ENCODE measurements at regions of chr3 and their contacts with region 1.

Region 1: DNA sequence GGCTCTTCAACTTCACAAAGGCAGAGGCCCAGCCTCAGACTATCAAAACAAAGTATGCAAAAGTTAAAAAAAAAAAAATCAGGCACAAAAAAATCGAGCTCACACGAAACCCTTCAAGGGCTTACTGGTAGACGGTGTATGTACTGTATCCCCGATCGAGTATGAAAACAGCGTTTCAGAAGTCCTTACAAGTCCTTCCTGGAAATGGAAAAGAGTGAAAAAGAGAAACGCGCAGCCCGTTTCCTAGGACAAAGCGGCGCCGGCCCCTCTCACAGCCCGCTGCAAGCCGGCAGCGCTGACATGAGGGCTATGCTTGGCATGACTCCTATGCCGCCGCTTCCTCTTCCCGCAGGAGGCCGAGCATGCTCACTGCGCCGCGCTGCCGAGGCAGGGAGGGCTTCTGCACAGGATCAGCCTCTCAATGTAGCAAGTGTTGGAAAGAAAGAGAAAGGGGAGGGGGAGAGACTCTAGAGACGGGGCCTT is at the start of gene VGLL4:
- DNase-seq: peak in 8 of 9 experiments; percentile 55 to 79 (median 66)
- ATAC-seq: peak; percentile 52
- H3K4me3 ChIP-seq: peak within 1 kb of the TSS; percentile 82 to 91
- H3K4me3 Mint-ChIP-seq: peak within 1 kb of the TSS; percentile 99
- H3K27ac ChIP-seq: peak within 1 kb of the TSS; percentile 85 to 95
- H3K27ac Mint-ChIP-seq: peak within 1 kb of the TSS; percentile 99
- H3K4me1 ChIP-seq: peaks cover 19% of the 10 kb centered on the region
- H3K4me1 Mint-ChIP-seq: peaks cover 33% of the 10 kb centered on the region
- H3K27me3 ChIP-seq: no peaks in the 10 kb centered on the region
- H3K27me3 Mint-ChIP-seq: no peaks in the 10 kb centered on the region
- CTCF ChIP-seq: no peak
- total RNA-seq, gene VGLL4: 13.8 to 14.1 TPM

Region 2: GRCh38 chr3:11582191-11582968 is 61.3 kb before region 1 on chr3:
- CTCF ChIA-PET with region 1: no interaction called
- POLR2A ChIA-PET with region 1: no interaction called
- intact Hi-C with region 1: loop called (anchors 5 to 10 kb)
- DNase-seq: no peak
- ATAC-seq: no peak
- H3K4me3 ChIP-seq: peak overlapping the region in 1 of 2 experiments; percentile 28
- H3K4me3 Mint-ChIP-seq: peak overlapping the region; percentile 64
- H3K27ac ChIP-seq: no peak overlapping the region
- H3K27ac Mint-ChIP-seq: peak overlapping the region; percentile 73
- H3K4me1 ChIP-seq: peaks cover 21% of the 10 kb centered on the region
- H3K4me1 Mint-ChIP-seq: peaks cover 63% of the 10 kb centered on the region
- H3K27me3 ChIP-seq: no peaks in the 10 kb centered on the region
- H3K27me3 Mint-ChIP-seq: no peaks in the 10 kb centered on the region
- CTCF ChIP-seq: no peak

Region 3: DNA sequence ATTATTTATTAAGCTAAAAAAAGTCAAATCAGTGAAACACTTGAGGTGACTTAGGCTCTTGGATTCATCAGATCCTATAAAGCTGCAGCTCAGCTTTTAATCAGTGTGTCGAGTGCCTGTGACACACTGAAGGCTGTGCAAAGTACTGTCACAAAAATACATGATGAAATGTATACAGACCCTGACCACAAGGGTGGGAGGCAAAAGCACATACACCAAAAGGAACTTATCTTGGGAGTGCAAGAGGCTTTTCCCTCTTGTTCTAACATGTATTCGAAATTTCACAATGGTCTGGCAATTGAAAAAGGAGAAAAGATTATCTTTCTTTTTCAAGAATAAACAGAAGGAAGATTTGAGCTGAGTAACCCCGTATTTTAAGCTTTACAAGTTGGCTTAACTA is 35.8 kb before region 1 on chr3:
- CTCF ChIA-PET with region 1: no interaction called
- POLR2A ChIA-PET with region 1: no interaction called
- intact Hi-C with region 1: loop called in 1 of 2 experiments (anchors 5 kb)
- DNase-seq: no peak
- ATAC-seq: no peak
- H3K4me3 ChIP-seq: no peak overlapping the region
- H3K4me3 Mint-ChIP-seq: no peak overlapping the region
- H3K27ac ChIP-seq: no peak overlapping the region
- H3K27ac Mint-ChIP-seq: peak overlapping the region; percentile 52
- H3K4me1 ChIP-seq: peaks cover under 1% of the 10 kb centered on the region
- H3K4me1 Mint-ChIP-seq: peaks cover 76% of the 10 kb centered on the region
- H3K27me3 ChIP-seq: no peaks in the 10 kb centered on the region
- H3K27me3 Mint-ChIP-seq: no peaks in the 10 kb centered on the region
- CTCF ChIP-seq: no peak

Region 4: GRCh38 chr3:11624161-11624560 is 19.5 kb before region 1 on chr3:
- CTCF ChIA-PET with region 1: interaction called, 3 read pairs
- POLR2A ChIA-PET with region 1: interaction called, 5 read pairs
- intact Hi-C with region 1: loop called in 1 of 2 experiments (anchors 2 kb)
- DNase-seq: peak in 5 of 9 experiments; percentile 34 to 75 (median 61)
- ATAC-seq: peak; percentile 91
- H3K4me3 ChIP-seq: no peak overlapping the region
- H3K4me3 Mint-ChIP-seq: peak overlapping the region; percentile 68
- H3K27ac ChIP-seq: peak overlapping the region in 1 of 2 experiments; percentile 15
- H3K27ac Mint-ChIP-seq: peak overlapping the region; percentile 82
- H3K4me1 ChIP-seq: peaks cover 45% of the 10 kb centered on the region
- H3K4me1 Mint-ChIP-seq: peaks cover 65% of the 10 kb centered on the region
- H3K27me3 ChIP-seq: no peaks in the 10 kb centered on the region
- H3K27me3 Mint-ChIP-seq: no peaks in the 10 kb centered on the region
- CTCF ChIP-seq: no peak

Region 5: DNA sequence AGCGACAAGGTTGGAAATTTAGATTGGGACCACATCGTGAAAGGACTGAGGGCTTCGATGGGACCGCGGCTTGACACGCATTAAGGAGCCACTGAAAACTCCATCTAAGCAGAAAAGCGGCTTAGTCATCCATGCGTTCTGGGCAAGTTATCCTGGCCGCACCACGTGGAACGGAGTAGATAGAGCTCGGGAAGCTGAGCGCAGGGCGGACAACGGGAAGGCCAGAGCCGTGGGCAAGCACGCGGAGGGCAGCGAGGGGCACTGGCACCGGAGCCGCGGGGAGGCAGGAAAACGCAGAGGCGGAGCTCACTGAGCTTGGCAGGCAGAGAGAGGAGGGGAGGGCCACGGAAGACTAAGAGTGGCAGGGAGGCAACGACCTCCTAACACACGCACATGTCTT is 61.4 kb after region 1 on chr3:
- CTCF ChIA-PET with region 1: no interaction called
- POLR2A ChIA-PET with region 1: no interaction called
- intact Hi-C with region 1: no loop called
- DNase-seq: no peak
- ATAC-seq: no peak
- H3K4me3 ChIP-seq: no peak overlapping the region
- H3K4me3 Mint-ChIP-seq: no peak overlapping the region
- H3K27ac ChIP-seq: no peak overlapping the region
- H3K27ac Mint-ChIP-seq: no peak overlapping the region
- H3K4me1 ChIP-seq: no peaks in the 10 kb centered on the region
- H3K4me1 Mint-ChIP-seq: no peaks in the 10 kb centered on the region
- H3K27me3 ChIP-seq: no peaks in the 10 kb centered on the region
- H3K27me3 Mint-ChIP-seq: no peaks in the 10 kb centered on the region
- CTCF ChIP-seq: no peak

Region 6: GRCh38 chr3:11719406-11720230 is 76.0 kb after region 1 on chr3:
- CTCF ChIA-PET with region 1: no interaction called
- POLR2A ChIA-PET with region 1: no interaction called
- intact Hi-C with region 1: loop called in 1 of 2 experiments (anchors 2 kb)
- DNase-seq: peak; percentile 54 to 86 (median 79)
- ATAC-seq: peak; percentile 81
- H3K4me3 ChIP-seq: peak overlapping the region; percentile 68 to 73
- H3K4me3 Mint-ChIP-seq: peak overlapping the region; percentile 88
- H3K27ac ChIP-seq: peak overlapping the region in 1 of 2 experiments; percentile 56
- H3K27ac Mint-ChIP-seq: no peak overlapping the region
- H3K4me1 ChIP-seq: peaks cover 15% of the 10 kb centered on the region
- H3K4me1 Mint-ChIP-seq: peaks cover 24% of the 10 kb centered on the region
- H3K27me3 ChIP-seq: no peaks in the 10 kb centered on the region
- H3K27me3 Mint-ChIP-seq: peaks cover 8% of the 10 kb centered on the region
- CTCF ChIP-seq: no peak

Region 7: GRCh38 chr3:11846281-11847034 is 202.8 kb after region 1 on chr3 and contains the start of gene TAMM41:
- CTCF ChIA-PET with region 1: no interaction called
- POLR2A ChIA-PET with region 1: interaction called, 8 read pairs
- intact Hi-C with region 1: loop called (anchors 5 kb)
- DNase-seq: peak; percentile 77 to 94 (median 89)
- ATAC-seq: peak; percentile 99
- H3K4me3 ChIP-seq: peak within 1 kb of the TSS; percentile 91 to 92
- H3K4me3 Mint-ChIP-seq: peak within 1 kb of the TSS; percentile 99
- H3K27ac ChIP-seq: peak within 1 kb of the TSS; percentile 80 to 88
- H3K27ac Mint-ChIP-seq: peak within 1 kb of the TSS; percentile 97
- H3K4me1 ChIP-seq: peaks cover 28% of the 10 kb centered on the region
- H3K4me1 Mint-ChIP-seq: peaks cover 52% of the 10 kb centered on the region
- H3K27me3 ChIP-seq: no peaks in the 10 kb centered on the region
- H3K27me3 Mint-ChIP-seq: no peaks in the 10 kb centered on the region
- CTCF ChIP-seq: peak; percentile 62
- total RNA-seq, gene TAMM41: 16.2 to 18.5 TPM

Region 8: GRCh38 chr3:12556671-12557472 is 913.2 kb after region 1 on chr3 and contains the start of gene MKRN2:
- CTCF ChIA-PET with region 1: no interaction called
- POLR2A ChIA-PET with region 1: no interaction called
- intact Hi-C with region 1: loop called in 1 of 2 experiments (anchors 5 kb)
- DNase-seq: peak; percentile 67 to 94 (median 83)
- ATAC-seq: peak; percentile 93
- H3K4me3 ChIP-seq: peak within 1 kb of the TSS; percentile 73 to 86
- H3K4me3 Mint-ChIP-seq: peak within 1 kb of the TSS; percentile 89
- H3K27ac ChIP-seq: peak within 1 kb of the TSS; percentile 86 to 92
- H3K27ac Mint-ChIP-seq: peak within 1 kb of the TSS; percentile 90
- H3K4me1 ChIP-seq: peaks cover 49% of the 10 kb centered on the region
- H3K4me1 Mint-ChIP-seq: peaks cover 60% of the 10 kb centered on the region
- H3K27me3 ChIP-seq: peaks cover 6 to 16% of the 10 kb centered on the region in 2 experiments
- H3K27me3 Mint-ChIP-seq: peaks cover 24% of the 10 kb centered on the region
- CTCF ChIP-seq: no peak
- total RNA-seq, gene MKRN2: 24.8 to 25.5 TPM

Region 9: GRCh38 chr3:13012228-13012691 is 1368.6 kb after region 1 on chr3:
- CTCF ChIA-PET with region 1: no interaction called
- POLR2A ChIA-PET with region 1: no interaction called
- intact Hi-C with region 1: no loop called
- DNase-seq: peak in 5 of 9 experiments; percentile 41 to 89 (median 70)
- ATAC-seq: peak; percentile 17
- H3K4me3 ChIP-seq: peak overlapping the region; percentile 4 to 12
- H3K4me3 Mint-ChIP-seq: peak overlapping the region; percentile 67
- H3K27ac ChIP-seq: peak overlapping the region; percentile 74 to 98
- H3K27ac Mint-ChIP-seq: peak overlapping the region; percentile 97
- H3K4me1 ChIP-seq: peaks cover 96% of the 10 kb centered on the region
- H3K4me1 Mint-ChIP-seq: peaks cover 80% of the 10 kb centered on the region
- H3K27me3 ChIP-seq: no peaks in the 10 kb centered on the region
- H3K27me3 Mint-ChIP-seq: no peaks in the 10 kb centered on the region
- CTCF ChIP-seq: no peak

Measured in CD8-positive, alpha-beta T cell (primary cell).